ENCODE measurements at regions of chr1 and their contacts with region 1.

Region 1: GRCh38 chr1:47710329-47711071 is 272.7 kb downstream of the FOXD2 start:
- DNase-seq: peak; percentile 17
- ATAC-seq: peak; percentile 89
- H3K4me3 ChIP-seq: peak overlapping the region in 1 of 3 experiments; percentile 73; a peak in 1 of 6 replicates
- H3K27ac ChIP-seq: no peak overlapping the region
- H3K4me1 ChIP-seq: peaks cover 20% of the 10 kb centered on the region
- H3K27me3 ChIP-seq: peaks cover 14 to 59% of the 10 kb centered on the region in 2 experiments
- CTCF ChIP-seq: peak; percentile 97
- EP300 ChIP-seq: no peak
- POLR2A ChIP-seq: no peak
- RAD21 ChIP-seq: peak; percentile 94

Region 2: DNA sequence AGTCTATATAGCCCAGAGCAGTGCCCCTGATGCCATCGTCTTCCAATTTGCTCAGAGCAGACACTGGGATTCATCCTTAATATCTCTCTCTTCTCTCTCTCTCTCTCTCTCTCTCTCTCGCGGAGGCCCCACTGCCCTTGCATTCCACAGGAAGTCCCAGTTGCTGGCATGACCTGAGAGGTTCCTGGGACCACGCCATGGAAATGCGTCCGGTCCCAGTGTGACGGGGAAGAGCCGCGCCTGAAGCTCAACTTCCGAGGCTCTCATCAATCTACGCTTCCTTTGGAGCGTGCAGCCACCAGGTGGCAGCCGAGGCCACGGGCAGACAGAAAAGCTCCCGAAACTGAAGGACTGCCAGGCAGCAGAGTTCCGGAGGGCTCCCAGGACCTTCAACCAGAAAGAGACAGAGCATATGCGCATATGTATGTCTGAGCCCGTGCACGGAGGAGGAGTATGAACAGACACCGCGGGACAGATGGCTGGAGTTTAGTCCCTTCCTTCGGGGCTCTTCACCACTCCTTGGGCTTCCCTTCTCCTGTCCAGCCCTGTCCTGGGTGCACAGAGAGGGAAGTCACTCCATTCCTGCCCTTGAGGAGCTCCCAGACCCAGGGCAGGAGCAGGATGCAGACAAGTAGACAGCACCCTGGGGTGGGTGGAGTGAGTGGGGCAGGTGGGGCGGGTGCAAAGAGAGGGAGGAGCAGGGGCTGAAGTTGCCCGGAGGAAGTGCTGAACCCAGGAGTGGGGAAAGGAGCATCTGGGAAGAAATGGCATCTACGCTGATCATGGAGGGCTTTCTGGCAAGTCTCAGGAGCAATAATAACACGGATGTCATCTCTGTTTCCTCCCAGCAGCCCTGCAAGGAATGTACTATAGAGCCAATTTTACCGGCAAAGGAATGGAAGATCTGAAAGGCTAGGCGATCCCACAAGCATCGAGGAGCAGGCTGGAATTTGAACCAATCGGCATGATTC is 531.2 kb before region 1 on chr1:
- CTCF ChIA-PET with region 1: no interaction called
- POLR2A ChIA-PET with region 1: no interaction called
- in situ Hi-C with region 1: loop called (anchors 25 kb)
- intact Hi-C with region 1: no loop called
- DNase-seq: peak; percentile 89
- ATAC-seq: peak; percentile 68
- H3K4me3 ChIP-seq: peak overlapping the region; percentile 53 to 76 (median 65)
- H3K27ac ChIP-seq: peak overlapping the region; percentile 16
- H3K4me1 ChIP-seq: peaks cover 79% of the 10 kb centered on the region
- H3K27me3 ChIP-seq: no peaks in the 10 kb centered on the region; a peak in 1 of 5 replicates
- CTCF ChIP-seq: peak; percentile 99
- EP300 ChIP-seq: no peak
- POLR2A ChIP-seq: no peak
- RAD21 ChIP-seq: peak; percentile 97

Region 3: GRCh38 chr1:47437447-47438164 is 272.9 kb before region 1 on chr1 and contains the start of gene FOXD2:
- CTCF ChIA-PET with region 1: interaction called, 34 read pairs
- POLR2A ChIA-PET with region 1: interaction called, 4 read pairs
- in situ Hi-C with region 1: no loop called
- intact Hi-C with region 1: loop called (anchors 1 kb)
- DNase-seq: peak; percentile 73
- ATAC-seq: peak; percentile 89
- H3K4me3 ChIP-seq: peak within 1 kb of the TSS; percentile 58 to 88 (median 78)
- H3K27ac ChIP-seq: peak within 1 kb of the TSS; percentile 63
- H3K4me1 ChIP-seq: peaks cover 14% of the 10 kb centered on the region
- H3K27me3 ChIP-seq: peaks cover 4 to 32% of the 10 kb centered on the region in 2 experiments; a peak in 4 of 5 replicates
- CTCF ChIP-seq: peak; percentile 84
- EP300 ChIP-seq: no peak
- POLR2A ChIP-seq: peak; percentile 30 to 69; a peak in 3 of 4 replicates
- RAD21 ChIP-seq: peak; percentile 68
- total RNA-seq, gene FOXD2: 0.07 and 0.09 TPM in 2 replicates

Region 4: GRCh38 chr1:47449822-47450552 is 260.5 kb before region 1 on chr1:
- CTCF ChIA-PET with region 1: interaction called, 5 read pairs
- POLR2A ChIA-PET with region 1: no interaction called
- in situ Hi-C with region 1: loop called (anchors 5 kb)
- intact Hi-C with region 1: loop called (anchors 1 kb)
- DNase-seq: peak; percentile 25
- ATAC-seq: peak; percentile 94
- H3K4me3 ChIP-seq: no peak overlapping the region
- H3K27ac ChIP-seq: no peak overlapping the region
- H3K4me1 ChIP-seq: no peaks in the 10 kb centered on the region
- H3K27me3 ChIP-seq: peaks cover 10 to 78% of the 10 kb centered on the region in 2 experiments; a peak in 4 of 5 replicates
- CTCF ChIP-seq: peak; percentile 79
- EP300 ChIP-seq: no peak
- POLR2A ChIP-seq: no peak
- RAD21 ChIP-seq: peak; percentile 77

Region 5: GRCh38 chr1:47527658-47528255 is 182.7 kb before region 1 on chr1:
- CTCF ChIA-PET with region 1: interaction called, 3 read pairs
- POLR2A ChIA-PET with region 1: no interaction called
- in situ Hi-C with region 1: loop called (anchors 5 kb)
- intact Hi-C with region 1: no loop called
- DNase-seq: peak; percentile 12
- ATAC-seq: peak; percentile 64
- H3K4me3 ChIP-seq: no peak overlapping the region
- H3K27ac ChIP-seq: no peak overlapping the region
- H3K4me1 ChIP-seq: no peaks in the 10 kb centered on the region
- H3K27me3 ChIP-seq: peaks cover 3 to 6% of the 10 kb centered on the region in 2 experiments; a peak in 3 of 5 replicates
- CTCF ChIP-seq: peak; percentile 68
- EP300 ChIP-seq: no peak
- POLR2A ChIP-seq: no peak
- RAD21 ChIP-seq: no peak

Measured in HepG2 (cell line).